Naive thymus-derived CD4-positive, alpha-beta T cell (primary cell): ENCODE measurements at regions of chr2 and their contacts with region 1.

Region 1: DNA sequence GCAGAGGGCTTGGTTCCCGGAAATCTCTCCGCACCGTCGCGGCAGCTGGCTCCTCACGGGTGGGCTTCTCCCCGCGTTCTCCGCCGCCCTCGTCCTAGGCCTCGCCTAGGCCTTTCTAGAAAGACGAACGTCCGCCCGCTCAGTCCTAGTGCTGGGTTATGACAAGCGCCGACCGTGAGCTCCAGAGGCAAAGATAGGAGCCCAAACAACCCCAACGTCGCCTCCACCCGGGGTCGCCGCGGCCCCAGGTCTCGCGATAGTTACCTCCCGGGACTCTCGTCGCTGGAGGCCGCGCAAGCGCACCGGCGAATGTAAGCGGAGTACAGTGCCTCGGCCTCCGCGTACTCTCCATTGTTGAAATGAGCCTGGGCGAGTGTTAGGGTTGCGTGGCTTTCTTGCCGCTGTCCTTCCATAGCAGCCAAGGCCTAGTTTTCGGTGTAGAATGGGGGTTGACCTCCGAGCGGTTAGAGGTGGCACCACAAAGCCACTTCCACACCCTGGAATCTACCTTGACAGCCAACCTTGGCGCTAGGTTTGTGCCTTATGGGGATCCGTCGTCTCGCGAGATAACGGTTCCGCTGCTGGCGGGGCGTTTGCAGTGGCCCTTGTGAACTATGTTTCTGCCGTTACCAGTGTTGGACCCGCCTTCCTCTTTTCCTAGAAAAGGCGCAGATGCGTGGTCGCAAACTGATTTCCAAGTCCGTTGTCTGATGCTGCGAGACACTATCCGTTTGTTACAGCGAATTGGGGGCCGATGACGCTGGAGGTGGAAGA is at the start of gene TTC32:
- DNase-seq: peak; percentile 90 to 98 (median 96)
- ATAC-seq: peak; percentile 91
- H3K4me3 ChIP-seq: peak within 1 kb of the TSS; percentile 95
- H3K4me3 Mint-ChIP-seq: peak within 1 kb of the TSS; percentile 84 to 99 (median 96)
- H3K27ac ChIP-seq: peak within 1 kb of the TSS; percentile 83
- H3K27ac Mint-ChIP-seq: peak within 1 kb of the TSS; percentile 93 to 100 (median 99)
- H3K4me1 ChIP-seq: peaks cover 15 to 23% of the 10 kb centered on the region in 2 donors
- H3K4me1 Mint-ChIP-seq: peaks cover 24 to 35% (median 31%) of the 10 kb centered on the region in 7 donors
- H3K27me3 ChIP-seq: no peaks in the 10 kb centered on the region
- H3K27me3 Mint-ChIP-seq: peaks cover 8 to 19% (median 13%) of the 10 kb centered on the region in 5 donors
- total RNA-seq, gene TTC32: 23.1 to 58.0 (median 44.9) TPM

Region 2: DNA sequence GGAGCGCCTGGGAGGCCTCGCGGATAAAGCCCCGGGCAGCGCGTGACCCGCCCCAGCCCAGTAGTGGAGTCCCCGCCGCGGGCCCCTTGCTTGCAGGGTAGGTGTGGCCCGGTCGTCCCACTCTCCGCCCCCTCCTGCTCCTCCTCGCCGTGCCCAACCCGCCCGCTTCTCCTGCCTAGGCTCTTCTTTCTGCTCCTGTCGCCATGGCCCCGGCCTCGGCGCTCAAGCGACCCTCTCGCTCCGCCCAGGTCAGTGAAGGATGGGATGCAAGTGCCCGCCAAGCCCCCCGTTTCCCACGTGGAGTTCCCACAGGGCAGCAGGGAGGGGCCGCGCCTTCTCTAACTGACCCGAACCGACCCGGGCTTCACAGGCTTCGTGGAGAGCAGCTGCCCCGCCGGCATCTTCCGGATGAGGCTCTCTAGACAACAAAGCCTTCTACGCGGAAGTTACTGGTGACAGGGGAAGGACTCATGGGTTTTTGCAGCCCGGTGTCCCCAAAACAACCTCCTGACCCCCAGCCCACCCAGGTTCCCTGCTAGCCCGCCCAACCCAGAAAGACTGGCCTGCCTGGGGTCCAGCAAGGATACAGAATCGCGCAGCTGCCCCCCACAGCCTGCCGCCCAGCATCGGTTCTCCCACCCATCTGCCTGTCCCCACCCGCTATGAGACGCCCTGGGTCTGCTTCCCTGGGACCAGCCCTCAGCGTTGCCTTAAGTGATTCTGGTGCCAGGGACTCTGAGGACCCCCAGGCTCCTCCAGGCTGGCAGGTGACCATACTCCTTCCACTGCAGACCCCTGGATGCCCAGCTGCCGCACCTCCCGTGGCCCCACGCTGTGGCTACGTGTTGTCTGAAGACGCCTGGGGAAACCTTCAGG is 32.7 kb before region 1 on chr2:
- CTCF ChIA-PET with region 1: no interaction called
- POLR2A ChIA-PET with region 1: interaction called, 22 read pairs
- intact Hi-C with region 1: loop called (anchors 1 kb)
- DNase-seq: peak; percentile 41 to 79 (median 74)
- ATAC-seq: peak; percentile 91
- H3K4me3 ChIP-seq: peak overlapping the region; percentile 74
- H3K4me3 Mint-ChIP-seq: peak overlapping the region; percentile 94 to 98 (median 97)
- H3K27ac ChIP-seq: peak overlapping the region; percentile 76
- H3K27ac Mint-ChIP-seq: peak overlapping the region; percentile 95 to 98 (median 96)
- H3K4me1 ChIP-seq: peaks cover 12 to 19% of the 10 kb centered on the region in 2 donors
- H3K4me1 Mint-ChIP-seq: peaks cover 25 to 48% (median 34%) of the 10 kb centered on the region in 7 donors
- H3K27me3 ChIP-seq: no peaks in the 10 kb centered on the region
- H3K27me3 Mint-ChIP-seq: peaks cover 0 to 7% (median 0%) of the 10 kb centered on the region in 5 donors

Region 3: DNA sequence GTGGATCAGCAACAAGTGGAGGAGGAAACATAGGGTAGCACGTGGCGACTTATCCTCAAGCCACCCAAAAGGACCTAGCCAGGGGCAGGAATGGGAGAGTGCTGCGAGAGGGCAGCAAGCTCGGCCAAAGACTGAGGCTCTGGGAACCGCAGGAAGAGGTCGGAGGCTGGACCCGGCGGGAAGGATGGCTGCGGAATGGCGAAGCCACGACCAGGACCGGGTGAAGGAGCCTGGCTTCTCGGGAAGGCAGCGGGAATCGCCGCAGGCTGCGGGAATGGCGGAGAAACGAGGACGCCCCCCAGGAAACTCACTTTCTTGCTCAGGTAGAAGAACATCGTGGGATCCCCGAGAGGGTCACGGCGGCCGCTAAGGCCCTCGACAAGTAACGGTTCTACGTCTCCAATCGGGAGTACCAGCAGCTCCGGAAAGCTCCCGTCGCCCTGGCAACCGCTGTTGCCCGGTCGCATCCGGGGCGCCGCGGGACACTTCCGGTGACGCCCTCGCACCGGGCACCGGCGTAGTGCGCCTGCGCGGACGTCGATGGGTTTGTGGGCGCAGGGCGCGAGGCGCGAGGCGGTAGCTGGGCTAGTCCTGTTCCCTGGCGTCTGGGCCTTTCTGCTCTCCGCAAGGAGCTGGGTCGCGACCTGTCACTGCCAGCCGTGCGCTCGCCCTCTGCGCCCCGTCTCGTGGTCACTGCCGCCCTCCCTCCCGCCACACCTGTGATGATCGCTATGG is 88.2 kb after region 1 on chr2 and contains the start of gene WDR35:
- CTCF ChIA-PET with region 1: no interaction called
- POLR2A ChIA-PET with region 1: interaction called, 3 read pairs
- intact Hi-C with region 1: loop called (anchors 1 kb)
- DNase-seq: peak; percentile 78 to 99 (median 86)
- ATAC-seq: peak; percentile 95
- H3K4me3 ChIP-seq: peak within 1 kb of the TSS; percentile 91
- H3K4me3 Mint-ChIP-seq: peak within 1 kb of the TSS; percentile 88 to 94 (median 89)
- H3K27ac ChIP-seq: peak within 1 kb of the TSS; percentile 68
- H3K27ac Mint-ChIP-seq: peak within 1 kb of the TSS; percentile 86 to 94 (median 89)
- H3K4me1 ChIP-seq: peaks cover 0 to 14% of the 10 kb centered on the region in 2 donors
- H3K4me1 Mint-ChIP-seq: peaks cover 11 to 33% (median 23%) of the 10 kb centered on the region in 7 donors
- H3K27me3 ChIP-seq: peaks cover 0 to 4% of the 10 kb centered on the region in 2 donors
- H3K27me3 Mint-ChIP-seq: peaks cover 7 to 30% (median 12%) of the 10 kb centered on the region in 5 donors
- total RNA-seq, gene WDR35: 3.2 to 6.0 (median 3.7) TPM

Region 4: GRCh38 chr2:20578895-20579825 is 677.5 kb after region 1 on chr2:
- CTCF ChIA-PET with region 1: no interaction called
- POLR2A ChIA-PET with region 1: no interaction called
- intact Hi-C with region 1: loop called (anchors 2 to 5 kb)
- DNase-seq: no peak
- ATAC-seq: no peak
- H3K4me3 ChIP-seq: no peak overlapping the region
- H3K4me3 Mint-ChIP-seq: no peak overlapping the region
- H3K27ac ChIP-seq: no peak overlapping the region
- H3K27ac Mint-ChIP-seq: no peak overlapping the region
- H3K4me1 ChIP-seq: peaks cover 13% of the 10 kb centered on the region in 2 donors
- H3K4me1 Mint-ChIP-seq: peaks cover 9 to 22% (median 10%) of the 10 kb centered on the region in 7 donors
- H3K27me3 ChIP-seq: no peaks in the 10 kb centered on the region
- H3K27me3 Mint-ChIP-seq: no peaks in the 10 kb centered on the region

Region 5: GRCh38 chr2:20822535-20823490 is 921.2 kb after region 1 on chr2 and contains the start of gene LDAH:
- CTCF ChIA-PET with region 1: no interaction called
- POLR2A ChIA-PET with region 1: interaction called, 3 read pairs
- intact Hi-C with region 1: loop called (anchors 2 to 5 kb)
- DNase-seq: peak; percentile 71 to 84 (median 81)
- ATAC-seq: peak; percentile 91
- H3K4me3 ChIP-seq: peak within 1 kb of the TSS; percentile 98
- H3K4me3 Mint-ChIP-seq: peak within 1 kb of the TSS; percentile 93 to 99 (median 97)
- H3K27ac ChIP-seq: peak within 1 kb of the TSS; percentile 86
- H3K27ac Mint-ChIP-seq: peak within 1 kb of the TSS; percentile 95 to 99 (median 98)
- H3K4me1 ChIP-seq: no peaks in the 10 kb centered on the region
- H3K4me1 Mint-ChIP-seq: peaks cover 7 to 45% (median 25%) of the 10 kb centered on the region in 7 donors
- H3K27me3 ChIP-seq: no peaks in the 10 kb centered on the region
- H3K27me3 Mint-ChIP-seq: peaks cover 0 to 2% (median 0%) of the 10 kb centered on the region in 5 donors
- total RNA-seq, gene LDAH: 11.1 to 29.8 (median 18.4) TPM